ENCODE measurements at regions of chr1 and their contacts with region 1.

Region 1: GRCh38 chr1:228457396-228458176 is 29.6 kb upstream of the RNF187 start:
- DNase-seq: peak; percentile 68 to 99 (median 76)
- ATAC-seq: peak; percentile 83
- H3K4me3 ChIP-seq: peak overlapping the region; percentile 67
- H3K4me3 Mint-ChIP-seq: peak overlapping the region; percentile 95
- H3K27ac ChIP-seq: peak overlapping the region; percentile 68 to 94
- H3K27ac Mint-ChIP-seq: peak overlapping the region; percentile 98
- H3K4me1 ChIP-seq: peaks cover 30% of the 10 kb centered on the region
- H3K4me1 Mint-ChIP-seq: peaks cover 54% of the 10 kb centered on the region
- H3K27me3 ChIP-seq: no peaks in the 10 kb centered on the region
- H3K27me3 Mint-ChIP-seq: peaks cover 5% of the 10 kb centered on the region
- CTCF ChIP-seq: no peak

Region 2: GRCh38 chr1:228212966-228213844 is 244.4 kb before region 1 on chr1:
- CTCF ChIA-PET with region 1: interaction called, 5 read pairs
- POLR2A ChIA-PET with region 1: interaction called, 7 read pairs
- intact Hi-C with region 1: loop called in 1 of 2 experiments (anchors 5 kb)
- DNase-seq: peak; percentile 83 to 96 (median 90)
- ATAC-seq: peak; percentile 89
- H3K4me3 ChIP-seq: peak overlapping the region; percentile 64
- H3K4me3 Mint-ChIP-seq: peak overlapping the region; percentile 92
- H3K27ac ChIP-seq: peak overlapping the region in 1 of 2 donors; percentile 21
- H3K27ac Mint-ChIP-seq: peak overlapping the region; percentile 86
- H3K4me1 ChIP-seq: peaks cover 22% of the 10 kb centered on the region
- H3K4me1 Mint-ChIP-seq: peaks cover 12% of the 10 kb centered on the region
- H3K27me3 ChIP-seq: no peaks in the 10 kb centered on the region
- H3K27me3 Mint-ChIP-seq: no peaks in the 10 kb centered on the region
- CTCF ChIP-seq: peak; percentile 59

Region 3: GRCh38 chr1:228416217-228416933 is 41.2 kb before region 1 on chr1 and contains the start of gene TRIM17:
- CTCF ChIA-PET with region 1: no interaction called
- POLR2A ChIA-PET with region 1: no interaction called
- intact Hi-C with region 1: loop called in 1 of 2 experiments (anchors 5 kb)
- DNase-seq: peak in 8 of 14 experiments; percentile 10 to 66 (median 45)
- ATAC-seq: peak; percentile 73
- H3K4me3 ChIP-seq: peak within 1 kb of the TSS; percentile 52
- H3K4me3 Mint-ChIP-seq: peak within 1 kb of the TSS; percentile 88
- H3K27ac ChIP-seq: no peak within 1 kb of the TSS
- H3K27ac Mint-ChIP-seq: no peak within 1 kb of the TSS
- H3K4me1 ChIP-seq: peaks cover 22% of the 10 kb centered on the region
- H3K4me1 Mint-ChIP-seq: peaks cover 24% of the 10 kb centered on the region
- H3K27me3 ChIP-seq: peaks cover 6 to 14% of the 10 kb centered on the region in 2 experiments
- H3K27me3 Mint-ChIP-seq: peaks cover 16% of the 10 kb centered on the region
- CTCF ChIP-seq: no peak
- total RNA-seq, gene TRIM17: 0.73 to 0.96 TPM

Measured in CD4-positive, alpha-beta T cell (primary cell).